ENCODE measurements at regions of chr10 and their contacts with region 1.

Region 1: GRCh38 chr10:80253266-80254245 is 35.9 kb downstream of the MAT1A start:
- DNase-seq: no peak
- ATAC-seq: no peak
- H3K4me3 ChIP-seq: no peak overlapping the region
- H3K27ac ChIP-seq: no peak overlapping the region
- H3K4me1 ChIP-seq: no peaks in the 10 kb centered on the region
- H3K27me3 ChIP-seq: peaks cover under 1 to 20% of the 10 kb centered on the region in 2 experiments; a peak in 3 of 5 replicates
- CTCF ChIP-seq: no peak
- EP300 ChIP-seq: no peak
- POLR2A ChIP-seq: no peak
- RAD21 ChIP-seq: no peak

Region 2: GRCh38 chr10:79507440-79508167 is 746.0 kb before region 1 on chr10:
- CTCF ChIA-PET with region 1: no interaction called
- POLR2A ChIA-PET with region 1: no interaction called
- in situ Hi-C with region 1: loop called (anchors 5 kb)
- intact Hi-C with region 1: no loop called
- DNase-seq: no peak
- ATAC-seq: no peak
- H3K4me3 ChIP-seq: no peak overlapping the region
- H3K27ac ChIP-seq: no peak overlapping the region
- H3K4me1 ChIP-seq: no peaks in the 10 kb centered on the region
- H3K27me3 ChIP-seq: peaks cover 8 to 36% of the 10 kb centered on the region in 2 experiments
- CTCF ChIP-seq: no peak
- EP300 ChIP-seq: no peak
- POLR2A ChIP-seq: no peak
- RAD21 ChIP-seq: no peak

Region 3: GRCh38 chr10:80205478-80206276 is 47.9 kb before region 1 on chr10 and contains the start of gene ANXA11:
- CTCF ChIA-PET with region 1: no interaction called
- POLR2A ChIA-PET with region 1: no interaction called
- in situ Hi-C with region 1: no loop called
- intact Hi-C with region 1: no loop called
- DNase-seq: peak; percentile 91 to 97 (median 94)
- ATAC-seq: peak; percentile 81
- H3K4me3 ChIP-seq: peak within 1 kb of the TSS; percentile 86
- H3K27ac ChIP-seq: peak within 1 kb of the TSS; percentile 91
- H3K4me1 ChIP-seq: peaks cover 46 to 66% of the 10 kb centered on the region in 2 experiments
- H3K27me3 ChIP-seq: no peaks in the 10 kb centered on the region
- CTCF ChIP-seq: no peak
- EP300 ChIP-seq: no peak
- POLR2A ChIP-seq: peak; percentile 96
- RAD21 ChIP-seq: no peak; a peak in 1 of 4 replicates
- polyA plus RNA-seq, gene ANXA11: 43.6 to 70.0 TPM

Region 4: DNA sequence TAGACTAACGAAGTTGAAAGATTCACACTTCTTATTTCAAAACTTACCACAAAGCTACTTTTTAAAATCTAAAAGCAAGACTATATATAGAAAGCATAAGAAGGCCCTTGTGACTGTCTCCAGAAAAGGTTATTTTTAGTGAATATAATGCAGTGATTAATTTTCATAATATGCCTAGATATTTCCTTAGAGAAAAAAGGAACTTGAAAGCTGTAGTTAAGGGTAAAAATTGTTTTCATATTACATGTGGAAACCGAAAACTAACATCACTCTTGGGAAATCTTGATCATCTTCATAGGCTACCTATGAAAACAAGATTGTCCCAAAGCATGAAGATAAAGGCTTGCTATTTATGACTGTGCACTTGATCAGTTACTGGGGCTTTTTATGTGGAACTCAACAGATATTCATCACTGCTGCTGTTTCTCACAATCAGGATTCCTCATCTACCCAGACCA is 507.4 kb after region 1 on chr10:
- CTCF ChIA-PET with region 1: no interaction called
- POLR2A ChIA-PET with region 1: no interaction called
- in situ Hi-C with region 1: no loop called
- intact Hi-C with region 1: no loop called
- DNase-seq: no peak
- ATAC-seq: no peak
- H3K4me3 ChIP-seq: no peak overlapping the region
- H3K27ac ChIP-seq: no peak overlapping the region
- H3K4me1 ChIP-seq: peaks cover 0 to 11% of the 10 kb centered on the region in 2 experiments; a peak in 4 of 5 replicates
- H3K27me3 ChIP-seq: no peaks in the 10 kb centered on the region
- CTCF ChIP-seq: no peak
- EP300 ChIP-seq: no peak
- POLR2A ChIP-seq: no peak
- RAD21 ChIP-seq: no peak